ENCODE measurements at regions of chr18 and their contacts with region 1.

Region 1: DNA sequence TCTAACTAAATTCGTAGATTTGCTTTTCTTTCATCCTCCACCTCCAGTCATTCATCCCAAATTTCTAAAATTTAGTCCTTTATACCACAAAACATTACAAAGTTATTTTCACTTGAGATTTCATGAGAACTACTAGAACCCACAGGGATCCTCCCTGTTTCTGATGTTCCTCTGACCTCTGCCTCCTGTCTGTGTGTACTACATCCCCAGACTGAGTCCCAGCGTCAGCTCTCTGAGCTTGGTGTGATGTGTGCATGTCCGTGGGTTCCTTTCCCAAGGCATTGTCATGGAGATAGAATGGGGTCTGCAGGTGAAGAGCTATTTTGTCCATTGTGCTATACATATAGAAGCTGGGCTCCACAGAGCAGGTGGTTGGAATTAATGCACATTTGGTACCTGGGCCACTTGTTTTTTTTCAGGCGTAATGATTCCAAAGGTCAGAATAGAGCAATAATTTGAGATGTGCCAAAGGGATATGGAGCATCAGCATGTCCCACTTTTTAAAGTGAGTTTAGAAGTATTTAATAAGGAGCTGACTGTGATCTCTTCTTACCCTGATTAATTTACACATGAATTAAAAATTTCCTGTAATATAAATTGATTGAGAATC is 151.2 kb upstream of the BOD1L2 start:
- DNase-seq: no peak
- H3K4me3 ChIP-seq: no peak overlapping the region
- H3K4me3 Mint-ChIP-seq: no peak overlapping the region
- H3K27ac Mint-ChIP-seq: no peak overlapping the region
- H3K4me1 ChIP-seq: no peaks in the 10 kb centered on the region
- H3K4me1 Mint-ChIP-seq: peaks cover 5% of the 10 kb centered on the region
- H3K27me3 ChIP-seq: no peaks in the 10 kb centered on the region
- H3K27me3 Mint-ChIP-seq: no peaks in the 10 kb centered on the region
- CTCF ChIP-seq: peak in 1 of 2 experiments; percentile 23

Region 2: DNA sequence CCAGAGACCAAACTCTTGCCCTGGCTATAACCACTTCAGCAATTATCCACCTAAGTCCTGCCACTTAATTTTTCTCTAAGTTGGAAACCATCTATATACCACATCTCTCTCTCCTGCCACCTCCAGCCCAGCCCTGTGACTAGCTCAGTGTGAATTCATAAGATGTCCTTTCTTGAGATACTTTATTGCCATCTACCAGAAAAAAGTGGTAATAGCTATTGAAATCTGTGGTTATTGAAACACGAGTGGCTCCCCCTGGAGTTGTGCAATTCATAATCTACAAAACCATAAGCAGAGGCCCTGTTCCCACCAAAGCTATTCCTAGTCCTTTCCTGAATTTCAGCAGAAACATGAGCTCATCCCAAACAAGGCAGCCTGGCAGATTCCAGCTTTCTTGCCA is 681.3 kb before region 1 on chr18:
- CTCF ChIA-PET with region 1: no interaction called
- POLR2A ChIA-PET with region 1: no interaction called
- intact Hi-C with region 1: no loop called
- DNase-seq: no peak
- H3K4me3 ChIP-seq: no peak overlapping the region
- H3K4me3 Mint-ChIP-seq: no peak overlapping the region
- H3K27ac Mint-ChIP-seq: no peak overlapping the region
- H3K4me1 ChIP-seq: no peaks in the 10 kb centered on the region
- H3K4me1 Mint-ChIP-seq: no peaks in the 10 kb centered on the region
- H3K27me3 ChIP-seq: no peaks in the 10 kb centered on the region
- H3K27me3 Mint-ChIP-seq: peaks cover 6% of the 10 kb centered on the region
- CTCF ChIP-seq: no peak

Region 3: DNA sequence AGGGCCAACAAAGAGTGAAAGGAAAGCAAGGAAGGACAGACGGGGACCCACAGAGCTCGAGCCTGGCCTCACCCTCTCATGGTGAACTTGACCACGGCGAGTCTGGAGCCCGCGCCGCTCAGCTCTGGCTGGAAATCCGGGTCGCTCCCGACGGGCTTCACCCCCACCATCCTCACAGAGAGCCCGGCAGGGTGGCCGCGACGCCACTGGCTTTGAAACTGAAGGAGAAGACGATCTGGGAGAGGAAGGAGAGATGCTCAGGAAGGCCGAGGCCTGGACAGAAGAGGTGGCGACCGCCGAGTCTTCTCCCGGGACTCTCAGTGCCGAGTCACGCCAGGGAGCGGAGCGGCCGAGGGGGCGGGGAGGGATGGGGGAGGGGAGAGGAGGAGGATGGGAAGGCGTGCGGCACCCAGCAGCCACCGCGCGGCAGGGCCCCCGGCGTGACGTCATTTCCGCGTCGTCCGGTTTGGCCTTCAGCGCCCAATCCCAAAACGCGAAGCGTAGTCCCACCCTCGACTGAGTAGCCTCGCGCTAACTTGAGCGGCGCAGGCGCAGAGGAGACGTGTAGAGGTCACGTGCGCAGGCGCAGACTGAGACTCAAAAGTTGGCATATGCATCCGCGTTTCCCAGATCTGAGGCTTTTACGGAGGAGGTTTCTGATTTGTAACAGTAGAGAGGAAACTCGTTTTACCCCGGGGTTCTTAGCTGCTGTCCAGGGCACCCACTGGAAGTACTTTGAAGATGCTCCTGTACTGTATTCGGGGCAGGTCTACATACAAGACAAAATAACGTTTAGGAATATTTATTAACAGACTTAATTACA is 357.2 kb before region 1 on chr18 and contains the start of gene TXNL1:
- CTCF ChIA-PET with region 1: no interaction called
- POLR2A ChIA-PET with region 1: no interaction called
- intact Hi-C with region 1: no loop called
- DNase-seq: peak; percentile 94 to 96
- H3K4me3 ChIP-seq: peak within 1 kb of the TSS; percentile 67
- H3K4me3 Mint-ChIP-seq: peak within 1 kb of the TSS; percentile 91
- H3K27ac Mint-ChIP-seq: peak within 1 kb of the TSS; percentile 98
- H3K4me1 ChIP-seq: no peaks in the 10 kb centered on the region
- H3K4me1 Mint-ChIP-seq: peaks cover 6% of the 10 kb centered on the region
- H3K27me3 ChIP-seq: no peaks in the 10 kb centered on the region
- H3K27me3 Mint-ChIP-seq: no peaks in the 10 kb centered on the region
- CTCF ChIP-seq: no peak
- total RNA-seq, gene TXNL1: 46.9 and 49.0 TPM in 2 replicates

Region 4: GRCh38 chr18:56869189-56869777 is 126.4 kb before region 1 on chr18:
- CTCF ChIA-PET with region 1: interaction called, 3 read pairs
- POLR2A ChIA-PET with region 1: no interaction called
- intact Hi-C with region 1: loop called (anchors 1 kb)
- DNase-seq: peak in 1 of 2 experiments; percentile 10
- H3K4me3 ChIP-seq: no peak overlapping the region
- H3K4me3 Mint-ChIP-seq: no peak overlapping the region
- H3K27ac Mint-ChIP-seq: no peak overlapping the region
- H3K4me1 ChIP-seq: no peaks in the 10 kb centered on the region
- H3K4me1 Mint-ChIP-seq: no peaks in the 10 kb centered on the region
- H3K27me3 ChIP-seq: no peaks in the 10 kb centered on the region
- H3K27me3 Mint-ChIP-seq: no peaks in the 10 kb centered on the region
- CTCF ChIP-seq: peak; percentile 48 to 51